ENCODE measurements at regions of chr1 and their contacts with region 1.

Region 1: GRCh38 chr1:114274621-114275317 is 121.1 kb upstream of the SYT6 start:
- DNase-seq: no peak
- ATAC-seq: no peak
- H3K4me3 ChIP-seq: no peak overlapping the region
- H3K27ac ChIP-seq: no peak overlapping the region
- H3K4me1 ChIP-seq: no peaks in the 10 kb centered on the region
- H3K27me3 ChIP-seq: no peaks in the 10 kb centered on the region
- CTCF ChIP-seq: no peak
- POLR2A ChIP-seq: no peak

Region 2: GRCh38 chr1:113917400-113918082 is 357.2 kb before region 1 on chr1:
- in situ Hi-C with region 1: no loop called
- intact Hi-C with region 1: no loop called
- DNase-seq: no peak
- ATAC-seq: no peak
- H3K4me3 ChIP-seq: no peak overlapping the region
- H3K27ac ChIP-seq: no peak overlapping the region
- H3K4me1 ChIP-seq: peaks cover 11% of the 10 kb centered on the region in 2 donors
- H3K27me3 ChIP-seq: no peaks in the 10 kb centered on the region
- CTCF ChIP-seq: no peak
- POLR2A ChIP-seq: no peak

Region 3: DNA sequence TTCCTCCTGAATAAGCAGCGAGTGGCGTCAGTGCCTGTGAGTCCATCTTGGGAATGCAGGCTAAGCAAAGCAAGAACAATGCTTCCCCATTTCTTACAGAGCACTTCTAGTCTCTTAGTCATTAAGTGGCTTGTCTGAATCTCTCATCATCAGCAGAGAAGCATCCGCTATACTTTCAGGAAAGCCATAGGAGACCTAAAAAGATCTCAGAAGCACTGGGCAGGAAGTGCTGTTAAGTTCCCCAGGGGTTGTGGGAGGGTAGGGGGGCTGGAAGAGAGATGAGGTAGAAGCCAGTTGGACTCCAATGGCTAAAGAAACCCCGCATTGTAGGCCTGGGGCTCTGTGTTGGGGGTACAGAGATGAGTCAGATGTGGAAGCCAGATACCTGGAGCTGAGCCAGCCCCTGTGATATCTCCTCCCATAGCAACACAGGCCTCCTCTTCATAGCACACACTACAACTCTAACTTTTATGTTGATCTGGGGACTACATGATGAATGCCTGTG is 166.0 kb before region 1 on chr1:
- in situ Hi-C with region 1: loop called in 1 of 4 experiments (anchors 10 kb)
- intact Hi-C with region 1: no loop called
- DNase-seq: no peak
- ATAC-seq: no peak
- H3K4me3 ChIP-seq: no peak overlapping the region
- H3K27ac ChIP-seq: no peak overlapping the region
- H3K4me1 ChIP-seq: peaks cover 5 to 8% of the 10 kb centered on the region in 2 donors
- H3K27me3 ChIP-seq: no peaks in the 10 kb centered on the region
- CTCF ChIP-seq: no peak
- POLR2A ChIP-seq: no peak

Measured in gastrocnemius medialis (tissue), 4 donors.